Posterior cingulate gyrus (tissue), 11 donors: ENCODE measurements at regions of chr3 and their contacts with region 1.

Region 1: DNA sequence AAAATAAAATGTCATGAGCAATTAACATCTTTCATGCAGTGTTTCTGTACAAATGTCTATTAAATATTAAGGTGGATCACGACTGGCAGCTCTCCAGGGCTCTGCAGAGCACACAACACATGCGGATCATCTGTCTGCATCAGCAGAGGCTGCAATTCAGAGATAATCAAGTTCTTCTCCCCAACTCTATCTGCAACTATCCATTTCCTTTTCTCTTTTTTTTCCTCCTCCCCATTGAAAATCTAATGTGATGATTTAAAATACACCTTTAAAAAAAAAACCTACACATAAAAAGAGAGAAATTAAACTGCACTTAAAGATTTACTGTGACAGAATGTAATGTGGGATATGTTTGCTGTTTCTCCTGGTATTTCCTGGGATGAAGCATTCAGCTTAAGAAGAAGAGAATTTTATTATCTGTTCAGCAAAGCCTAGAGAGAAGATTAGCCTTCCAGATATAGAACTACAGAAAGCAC is 352.6 kb upstream of the CCDC54 start:
- DNase-seq: peak in 1 of 10 donors; percentile 31

Region 2: DNA sequence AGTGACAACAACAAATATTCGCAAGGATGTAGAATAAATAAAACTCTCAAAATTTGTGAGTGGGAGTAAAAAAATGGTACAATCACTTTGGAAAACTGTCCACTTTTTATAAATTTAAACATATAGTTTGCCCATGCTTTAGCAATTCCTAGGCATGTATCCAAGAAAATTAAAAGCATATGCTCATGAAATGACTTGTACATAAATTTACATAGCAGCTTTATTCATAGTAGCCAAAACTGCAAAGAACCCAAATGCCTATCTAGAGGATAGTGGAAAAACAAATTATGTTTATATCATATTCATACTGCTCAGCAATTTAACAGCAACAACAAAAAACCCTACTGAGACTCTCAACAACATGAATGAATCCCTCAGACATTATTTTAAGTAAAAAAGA is 10.9 kb before region 1 on chr3:
- intact Hi-C with region 1: loop called (anchors 1 kb)
- DNase-seq: no peak